ENCODE measurements at regions of chr22 and their contacts with region 1.

Region 1: GRCh38 chr22:27212617-27213177 is 555.3 kb downstream of the MIAT start:
- DNase-seq: peak; percentile 34 to 81 (median 54)
- H3K4me3 ChIP-seq: no peak overlapping the region
- H3K4me3 Mint-ChIP-seq: no peak overlapping the region
- H3K27ac ChIP-seq: no peak overlapping the region
- H3K27ac Mint-ChIP-seq: peak overlapping the region in 1 of 7 donors; percentile 60
- H3K4me1 ChIP-seq: peaks cover 6 to 7% of the 10 kb centered on the region in 2 donors
- H3K4me1 Mint-ChIP-seq: peaks cover 9% of the 10 kb centered on the region
- H3K27me3 ChIP-seq: peaks cover 0 to 3% of the 10 kb centered on the region in 2 donors
- H3K27me3 Mint-ChIP-seq: peaks cover 11 to 18% (median 16%) of the 10 kb centered on the region in 3 donors
- CTCF ChIP-seq: no peak

Region 2: DNA sequence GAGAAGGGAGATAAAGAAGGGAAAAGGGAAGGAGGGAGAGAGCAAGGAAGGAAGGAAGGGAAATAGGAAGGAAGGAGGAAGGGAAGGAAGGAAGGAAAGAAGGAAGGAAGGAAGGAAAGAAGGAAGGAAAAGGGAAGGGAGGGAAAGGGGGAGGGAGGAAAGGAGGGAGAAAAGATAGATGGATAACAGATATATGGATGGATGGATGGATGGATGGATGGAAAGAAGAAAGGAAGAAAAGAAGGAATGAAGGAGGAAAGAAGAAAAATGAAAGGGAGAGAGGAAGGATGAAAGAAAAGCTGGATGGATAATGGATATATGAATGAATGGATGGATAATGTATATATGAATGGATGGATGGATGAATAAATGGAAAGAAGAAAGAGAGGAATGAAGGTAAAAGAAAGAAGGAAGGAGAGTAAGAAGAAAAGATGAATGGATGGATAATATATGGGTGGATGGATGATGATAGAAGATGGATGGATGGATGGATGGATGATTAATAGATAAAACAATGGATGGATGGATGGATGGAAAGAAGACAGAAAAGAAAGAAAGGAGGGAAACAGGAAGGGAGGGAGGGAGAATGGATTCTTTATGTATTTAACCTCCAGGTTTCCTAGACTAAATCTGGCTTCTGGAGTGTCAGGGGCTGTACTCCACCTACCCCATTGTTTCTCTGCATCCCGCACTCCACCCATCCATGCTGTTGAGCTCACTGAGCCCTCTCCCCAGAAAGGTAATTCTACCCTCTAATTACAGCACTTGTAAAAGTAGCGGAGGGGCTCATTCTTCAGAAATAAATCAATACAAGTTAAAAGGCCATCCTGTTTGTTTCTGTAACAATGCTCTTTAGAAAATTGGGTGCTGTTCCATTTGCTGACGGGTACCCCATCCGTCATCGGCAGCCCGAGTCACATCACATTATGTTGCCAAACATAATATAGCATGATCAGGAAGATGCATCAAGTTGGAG is 49.2 kb before region 1 on chr22:
- intact Hi-C with region 1: loop called in 1 of 2 experiments (anchors 5 kb)
- DNase-seq: no peak
- H3K4me3 ChIP-seq: no peak overlapping the region
- H3K4me3 Mint-ChIP-seq: no peak overlapping the region
- H3K27ac ChIP-seq: no peak overlapping the region
- H3K27ac Mint-ChIP-seq: no peak overlapping the region
- H3K4me1 ChIP-seq: no peaks in the 10 kb centered on the region
- H3K4me1 Mint-ChIP-seq: peaks cover 5% of the 10 kb centered on the region
- H3K27me3 ChIP-seq: peaks cover 2 to 7% of the 10 kb centered on the region in 2 donors
- H3K27me3 Mint-ChIP-seq: peaks cover 5 to 33% (median 10%) of the 10 kb centered on the region in 3 donors
- CTCF ChIP-seq: no peak

Region 3: DNA sequence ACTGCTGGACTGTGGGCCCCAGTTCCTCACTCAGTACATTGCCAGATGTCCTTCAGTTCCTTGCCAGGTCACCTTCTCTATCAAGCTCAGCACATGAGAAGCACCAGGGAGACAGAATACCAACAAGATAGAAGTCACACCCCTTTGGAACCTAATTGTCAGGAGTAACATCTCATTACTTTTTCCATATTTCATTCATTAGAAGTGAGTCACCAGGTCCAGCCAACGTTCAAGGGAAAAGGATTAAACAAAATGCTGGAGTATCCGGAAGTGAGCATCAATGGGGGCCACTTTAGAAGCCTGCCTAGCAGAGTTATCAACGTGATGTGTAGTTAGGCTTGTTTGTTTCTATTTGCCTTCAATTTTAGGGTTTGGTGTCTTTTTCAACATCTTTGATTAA is 14.0 kb after region 1 on chr22:
- intact Hi-C with region 1: no loop called
- DNase-seq: no peak
- H3K4me3 ChIP-seq: no peak overlapping the region
- H3K4me3 Mint-ChIP-seq: no peak overlapping the region
- H3K27ac ChIP-seq: no peak overlapping the region
- H3K27ac Mint-ChIP-seq: no peak overlapping the region
- H3K4me1 ChIP-seq: no peaks in the 10 kb centered on the region
- H3K4me1 Mint-ChIP-seq: no peaks in the 10 kb centered on the region
- H3K27me3 ChIP-seq: peaks cover 3 to 10% of the 10 kb centered on the region in 2 donors
- H3K27me3 Mint-ChIP-seq: peaks cover 3 to 8% (median 6%) of the 10 kb centered on the region in 3 donors
- CTCF ChIP-seq: no peak

Measured in CD14-positive monocyte (primary cell).